CD8-positive, alpha-beta memory T cell (primary cell): ENCODE measurements at regions of chr1 and their contacts with region 1.

Region 1: GRCh38 chr1:2044510-2045319 is 5.5 kb upstream of the PRKCZ start:
- DNase-seq: peak; percentile 79 to 84 (median 79)
- H3K4me3 ChIP-seq: no peak overlapping the region
- H3K4me3 Mint-ChIP-seq: peak overlapping the region; percentile 13 to 65 (median 53)
- H3K27ac ChIP-seq: no peak overlapping the region
- H3K27ac Mint-ChIP-seq: peak overlapping the region in 2 of 8 donors; percentile 21 to 29
- H3K4me1 ChIP-seq: peaks cover 16% of the 10 kb centered on the region
- H3K4me1 Mint-ChIP-seq: peaks cover 14 to 26% (median 19%) of the 10 kb centered on the region in 3 donors
- H3K27me3 ChIP-seq: no peaks in the 10 kb centered on the region
- H3K27me3 Mint-ChIP-seq: peaks cover 4 to 8% of the 10 kb centered on the region in 2 donors

Region 2: GRCh38 chr1:1943834-1944570 is 100.7 kb before region 1 on chr1:
- CTCF ChIA-PET with region 1: interaction called, 27 read pairs
- POLR2A ChIA-PET with region 1: no interaction called
- DNase-seq: peak; percentile 33 to 70 (median 44)
- H3K4me3 ChIP-seq: no peak overlapping the region
- H3K4me3 Mint-ChIP-seq: peak overlapping the region in 4 of 7 donors; percentile 41 to 79 (median 54)
- H3K27ac ChIP-seq: no peak overlapping the region
- H3K27ac Mint-ChIP-seq: peak overlapping the region in 1 of 8 donors; percentile 55
- H3K4me1 ChIP-seq: peaks cover 8% of the 10 kb centered on the region
- H3K4me1 Mint-ChIP-seq: peaks cover 0 to 7% (median 2%) of the 10 kb centered on the region in 3 donors
- H3K27me3 ChIP-seq: no peaks in the 10 kb centered on the region
- H3K27me3 Mint-ChIP-seq: peaks cover 3 to 5% of the 10 kb centered on the region in 2 donors

Region 3: DNA sequence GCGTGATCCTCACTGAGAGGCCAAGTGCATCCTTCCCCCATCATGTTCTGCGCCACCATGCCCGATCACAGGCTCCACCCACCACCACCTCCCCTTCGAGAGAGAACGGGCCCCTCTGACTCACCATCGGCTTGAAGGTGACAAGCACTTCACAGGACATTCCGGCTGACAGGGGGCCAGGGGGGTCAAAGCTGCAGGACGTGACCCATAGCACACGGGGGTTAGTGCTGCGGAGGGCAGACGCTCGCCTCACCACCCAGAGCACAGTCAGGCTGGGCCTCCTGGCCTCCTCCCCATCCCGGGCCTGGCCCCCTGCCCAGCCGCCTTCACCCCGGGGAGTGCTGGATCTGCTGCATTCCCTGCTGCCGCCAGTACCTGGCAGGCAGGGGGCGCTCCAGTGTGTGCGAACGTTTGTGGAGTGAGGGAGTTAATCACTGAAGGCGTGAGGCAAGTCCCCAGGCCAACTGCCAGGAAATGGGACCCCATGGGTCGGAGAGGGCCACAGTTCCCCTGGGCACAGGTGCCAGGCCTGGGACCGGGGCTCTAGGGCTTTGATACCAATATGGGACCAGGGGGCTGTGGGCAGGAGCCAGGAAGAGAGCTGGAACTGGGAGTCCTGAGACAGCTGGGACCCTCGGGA is 84.8 kb before region 1 on chr1:
- CTCF ChIA-PET with region 1: interaction called, 11 read pairs
- POLR2A ChIA-PET with region 1: no interaction called
- DNase-seq: peak; percentile 20 to 60 (median 30)
- H3K4me3 ChIP-seq: no peak overlapping the region
- H3K4me3 Mint-ChIP-seq: no peak overlapping the region
- H3K27ac ChIP-seq: no peak overlapping the region
- H3K27ac Mint-ChIP-seq: no peak overlapping the region
- H3K4me1 ChIP-seq: no peaks in the 10 kb centered on the region
- H3K4me1 Mint-ChIP-seq: no peaks in the 10 kb centered on the region
- H3K27me3 ChIP-seq: peaks cover 5% of the 10 kb centered on the region
- H3K27me3 Mint-ChIP-seq: peaks cover 20 to 37% of the 10 kb centered on the region in 2 donors